ENCODE measurements at regions of chr6 and their contacts with region 1.

Region 1: DNA sequence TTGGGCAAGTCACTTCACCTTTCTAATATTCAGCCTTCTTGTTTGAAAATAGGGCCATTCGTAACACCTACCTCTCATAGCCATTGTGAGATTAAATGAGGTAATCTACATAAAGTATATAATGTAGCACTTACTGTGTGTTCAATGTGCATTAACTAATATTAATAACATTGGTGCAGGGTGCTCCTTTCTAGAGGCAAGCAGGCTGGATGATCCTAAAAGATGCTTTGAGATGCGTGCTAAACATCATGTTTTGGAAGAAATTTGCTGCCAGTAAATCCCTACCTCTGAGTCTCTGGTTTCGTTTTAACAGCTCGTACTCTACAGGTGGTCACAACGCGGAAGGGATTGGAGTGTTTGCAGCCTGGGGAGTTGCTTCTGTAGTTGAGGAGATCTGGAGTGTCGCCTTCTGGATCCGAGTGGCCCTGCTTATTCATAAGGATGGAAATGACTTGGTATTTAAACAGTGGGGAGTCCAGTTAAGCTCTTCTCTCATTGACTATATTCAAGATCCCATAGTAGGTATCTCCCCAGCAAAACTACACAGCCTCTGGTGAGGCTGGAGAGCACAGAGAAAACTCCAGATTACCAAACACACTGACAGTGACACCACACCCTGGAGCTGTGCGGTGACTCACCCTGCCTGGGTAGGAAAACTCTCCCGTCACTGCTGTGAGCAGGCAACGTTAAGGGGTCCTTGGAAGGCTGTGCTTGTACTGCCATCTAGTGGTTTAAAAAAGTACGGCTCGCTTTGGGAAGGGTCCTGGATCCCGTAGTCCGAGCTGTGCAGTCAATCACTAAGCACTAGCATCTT is 107.9 kb downstream of the MAP3K7 start:
- DNase-seq: peak; percentile 83 to 93 (median 85)
- ATAC-seq: peak; percentile 97 to 100 (median 99)
- H3K4me3 ChIP-seq: no peak overlapping the region
- H3K27ac ChIP-seq: no peak overlapping the region
- H3K4me1 ChIP-seq: peaks cover 0 to 10% (median 2%) of the 10 kb centered on the region in 12 donors
- H3K27me3 ChIP-seq: no peaks in the 10 kb centered on the region
- CTCF ChIP-seq: peak; percentile 86 to 97 (median 92)
- POLR2A ChIP-seq: no peak

Region 2: DNA sequence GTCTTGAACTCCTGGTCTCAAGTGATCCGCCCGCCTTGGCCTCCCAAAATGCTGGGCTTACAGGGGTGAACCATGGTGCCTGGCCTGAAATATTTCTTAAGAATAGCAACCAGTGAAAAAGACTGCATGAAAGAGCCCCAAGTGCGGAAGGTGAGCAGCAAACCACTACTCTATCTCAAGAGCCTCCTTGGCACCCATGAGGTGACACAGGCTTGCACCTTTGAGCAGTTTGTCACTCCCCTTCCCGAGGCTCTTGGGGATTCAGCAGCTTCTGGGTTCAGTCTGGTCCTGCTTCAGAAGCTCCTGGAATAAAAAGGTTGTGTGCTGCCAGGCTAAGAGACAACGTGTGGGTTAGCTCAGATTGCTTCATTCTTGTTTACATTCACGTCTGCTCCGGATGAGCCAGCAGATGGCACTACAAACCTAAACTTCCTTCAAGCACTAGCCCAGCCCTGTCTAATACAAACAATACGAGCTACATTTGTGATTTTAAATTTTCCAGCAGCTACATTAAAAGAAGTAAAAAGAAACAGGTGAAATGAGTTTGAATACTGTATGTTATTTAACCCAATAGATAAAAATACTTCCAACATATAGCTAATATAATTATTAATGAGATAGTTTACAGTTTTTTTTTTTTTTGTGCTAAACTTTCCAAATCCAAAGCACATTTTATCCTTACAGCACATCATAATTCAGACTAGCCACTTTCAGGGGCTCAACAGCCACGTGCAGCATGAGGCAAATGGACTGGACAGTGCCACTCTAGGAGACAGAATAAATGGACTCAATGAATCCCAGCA is 538.6 kb before region 1 on chr6:
- intact Hi-C with region 1: loop called (anchors 1 to 2 kb)
- DNase-seq: peak in 4 of 5 donors; percentile 56 to 60 (median 59)
- ATAC-seq: peak; percentile 83 to 92 (median 90)
- H3K4me3 ChIP-seq: no peak overlapping the region
- H3K27ac ChIP-seq: no peak overlapping the region
- H3K4me1 ChIP-seq: peaks cover 0 to 8% (median 0%) of the 10 kb centered on the region in 12 donors
- H3K27me3 ChIP-seq: no peaks in the 10 kb centered on the region
- CTCF ChIP-seq: peak; percentile 46 to 81 (median 70)
- POLR2A ChIP-seq: no peak

Region 3: GRCh38 chr6:90098001-90098531 is 380.9 kb before region 1 on chr6:
- intact Hi-C with region 1: loop called in 1 of 10 experiments (anchors 10 kb)
- DNase-seq: peak in 4 of 5 donors; percentile 29 to 57 (median 50)
- ATAC-seq: peak; percentile 85 to 94 (median 88)
- H3K4me3 ChIP-seq: no peak overlapping the region
- H3K27ac ChIP-seq: peak overlapping the region in 11 of 12 donors; percentile 44 to 84 (median 68)
- H3K4me1 ChIP-seq: peaks cover 0 to 43% (median 22%) of the 10 kb centered on the region in 12 donors
- H3K27me3 ChIP-seq: no peaks in the 10 kb centered on the region
- CTCF ChIP-seq: peak in 11 of 12 donors; percentile 3 to 66 (median 42)
- POLR2A ChIP-seq: no peak

Region 4: DNA sequence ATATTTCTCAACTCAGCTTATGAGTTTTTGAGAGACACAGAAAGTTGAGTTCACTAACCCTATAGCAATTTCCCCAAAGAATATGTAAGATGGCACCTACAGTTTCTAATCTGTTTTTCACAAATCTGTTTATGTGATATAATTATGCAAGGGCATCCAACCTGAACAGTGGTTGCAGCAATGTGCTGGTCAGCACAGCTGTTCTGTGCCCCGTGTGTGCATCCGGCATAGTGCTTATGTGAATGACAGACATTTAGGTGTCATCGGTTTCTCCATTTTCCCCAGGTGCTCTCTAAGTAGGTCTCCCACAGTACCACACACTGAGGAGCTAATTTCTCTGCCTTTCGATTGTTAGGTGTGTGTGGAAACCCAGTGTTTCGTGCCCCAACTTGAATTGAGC is 174.7 kb before region 1 on chr6:
- intact Hi-C with region 1: loop called in 7 of 10 experiments (anchors 5 to 10 kb)
- DNase-seq: no peak
- ATAC-seq: no peak
- H3K4me3 ChIP-seq: no peak overlapping the region
- H3K27ac ChIP-seq: no peak overlapping the region
- H3K4me1 ChIP-seq: peaks cover 0 to 6% (median 0%) of the 10 kb centered on the region in 12 donors
- H3K27me3 ChIP-seq: no peaks in the 10 kb centered on the region
- CTCF ChIP-seq: no peak
- POLR2A ChIP-seq: no peak

Region 5: GRCh38 chr6:90444160-90444714 is 34.8 kb before region 1 on chr6:
- intact Hi-C with region 1: no loop called
- DNase-seq: no peak
- ATAC-seq: no peak
- H3K4me3 ChIP-seq: no peak overlapping the region
- H3K27ac ChIP-seq: no peak overlapping the region
- H3K4me1 ChIP-seq: peaks cover 0 to 11% (median 0%) of the 10 kb centered on the region in 12 donors
- H3K27me3 ChIP-seq: no peaks in the 10 kb centered on the region
- CTCF ChIP-seq: no peak
- POLR2A ChIP-seq: no peak

Measured in heart left ventricle (tissue), 16 donors.